Mammary epithelial cell (primary cell): ENCODE measurements at regions of chr21 and their contacts with region 1.

Region 1: DNA sequence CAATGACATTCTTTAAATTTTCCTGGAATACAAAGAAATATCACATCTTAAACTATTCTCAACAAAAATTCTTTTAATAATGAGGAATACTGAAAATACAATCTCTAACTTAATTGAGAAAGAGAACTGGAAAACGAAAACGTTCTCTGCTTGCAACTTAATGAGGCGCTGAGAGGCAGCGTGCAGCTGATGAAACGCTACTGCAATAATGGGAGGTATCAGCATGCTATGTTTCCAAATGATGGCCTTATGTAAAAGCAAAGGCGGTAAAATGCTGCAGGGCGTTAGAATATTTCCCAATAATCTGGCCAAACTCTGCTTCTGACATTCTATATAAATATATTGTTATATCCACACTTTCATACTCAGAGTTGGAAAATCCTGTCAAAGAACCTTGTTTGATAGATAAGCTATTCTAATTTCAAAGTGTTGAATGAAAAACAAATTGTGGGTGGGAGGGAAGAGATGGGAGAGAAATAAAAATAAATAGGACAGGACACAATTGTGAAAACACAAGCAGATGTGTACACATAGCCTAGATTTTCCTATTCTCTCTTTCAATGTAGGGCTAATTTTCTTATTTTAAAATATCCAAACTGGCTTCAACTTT is 70.9 kb downstream of the APP start:
- DNase-seq: no peak
- H3K4me3 ChIP-seq: no peak overlapping the region
- H3K27ac ChIP-seq: peak overlapping the region; percentile 66
- H3K4me1 ChIP-seq: peaks cover 16% of the 10 kb centered on the region
- H3K27me3 ChIP-seq: no peaks in the 10 kb centered on the region
- CTCF ChIP-seq: no peak

Region 2: GRCh38 chr21:26120828-26121227 is 21.1 kb after region 1 on chr21:
- CTCF ChIA-PET with region 1: no interaction called
- dilution Hi-C with region 1: no loop called
- in situ Hi-C with region 1: no loop called
- intact Hi-C with region 1: loop called (anchors 2 kb)
- DNase-seq: peak; percentile 86
- H3K4me3 ChIP-seq: no peak overlapping the region
- H3K27ac ChIP-seq: peak overlapping the region; percentile 18
- H3K4me1 ChIP-seq: peaks cover 54% of the 10 kb centered on the region
- H3K27me3 ChIP-seq: no peaks in the 10 kb centered on the region
- CTCF ChIP-seq: no peak